OCI-LY7 (cell line): ENCODE measurements at regions of chr1 and their contacts with region 1.

Region 1: DNA sequence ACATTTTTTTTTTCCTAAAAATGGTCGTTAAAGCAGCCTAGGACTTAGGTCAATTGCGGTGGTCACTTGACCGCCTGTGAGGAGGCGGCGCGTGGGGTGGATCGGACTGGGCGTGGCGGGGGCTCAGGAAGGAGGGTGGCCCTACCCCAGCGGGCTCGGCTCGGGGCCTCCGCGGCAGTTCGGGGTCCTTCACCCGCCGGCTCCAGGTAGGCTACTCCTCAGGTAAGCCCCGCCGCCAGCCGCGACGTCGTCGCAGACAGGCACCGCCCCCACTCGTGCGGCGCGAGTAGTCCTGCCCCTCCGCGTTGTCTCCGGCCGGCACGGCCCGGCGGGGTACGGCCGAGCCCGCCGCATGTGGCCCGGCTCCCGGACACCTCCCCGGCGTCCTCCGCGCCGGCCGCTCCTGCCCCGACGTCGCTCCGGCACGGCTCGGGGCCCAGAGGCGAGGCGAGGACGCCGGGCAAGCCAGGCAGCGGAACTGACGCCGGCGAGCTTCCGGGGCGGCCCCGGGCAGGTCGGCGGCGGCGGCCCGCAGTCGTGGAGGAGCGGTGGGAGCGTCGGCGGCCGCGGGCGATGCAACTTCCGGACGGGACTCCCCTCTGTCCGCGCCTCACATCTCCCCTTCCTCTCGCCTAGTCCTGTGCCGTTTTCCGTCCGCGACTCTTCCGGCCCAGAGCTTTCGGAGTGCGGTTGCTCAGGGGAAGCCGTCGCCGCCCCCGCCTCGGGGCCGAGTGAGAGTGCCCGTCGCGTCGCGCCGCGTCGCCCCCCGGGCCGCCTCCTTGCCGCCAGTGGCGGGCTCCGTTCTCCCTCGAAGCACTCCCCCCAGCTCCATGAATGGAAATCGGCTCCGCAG is at the start of gene AGO3:
- DNase-seq: peak; percentile 91
- H3K4me3 ChIP-seq: peak within 1 kb of the TSS; percentile 93
- H3K27ac ChIP-seq: peak within 1 kb of the TSS; percentile 83
- H3K4me1 ChIP-seq: peaks cover 42% of the 10 kb centered on the region
- CTCF ChIP-seq: no peak
- total RNA-seq, gene AGO3: 22.5 and 25.1 TPM in 2 replicates

Region 2: GRCh38 chr1:35882945-35883634 is 47.7 kb before region 1 on chr1 and contains the start of gene AGO1:
- CTCF ChIA-PET with region 1: no interaction called
- POLR2A ChIA-PET with region 1: interaction called, 3 read pairs
- intact Hi-C with region 1: loop called (anchors 1 kb)
- DNase-seq: peak; percentile 95
- H3K4me3 ChIP-seq: peak within 1 kb of the TSS; percentile 99
- H3K27ac ChIP-seq: peak within 1 kb of the TSS; percentile 14
- H3K4me1 ChIP-seq: peaks cover 42% of the 10 kb centered on the region
- CTCF ChIP-seq: peak; percentile 88
- total RNA-seq, gene AGO1: 5.8 and 8.1 TPM in 2 replicates

Region 3: DNA sequence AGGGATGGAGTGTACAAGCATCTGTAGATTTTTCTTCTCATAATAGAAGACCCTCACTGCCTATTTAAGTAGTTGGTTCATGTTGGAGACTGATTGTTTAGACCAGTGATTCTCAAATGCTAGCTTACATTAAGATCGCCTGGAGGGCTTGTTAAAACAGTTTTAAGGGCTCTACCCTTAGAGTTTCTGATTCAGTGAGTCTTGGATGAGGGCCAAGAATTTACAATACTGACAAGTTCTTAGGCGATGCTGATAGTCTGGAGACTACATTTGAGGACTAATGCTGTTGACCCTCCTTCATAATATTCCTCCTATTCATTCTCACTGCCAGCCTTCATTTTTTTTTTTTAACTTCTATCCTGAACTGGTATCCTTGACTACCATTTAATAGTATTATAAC is 15.1 kb before region 1 on chr1:
- CTCF ChIA-PET with region 1: no interaction called
- POLR2A ChIA-PET with region 1: no interaction called
- intact Hi-C with region 1: no loop called
- DNase-seq: no peak
- H3K4me3 ChIP-seq: no peak overlapping the region
- H3K27ac ChIP-seq: no peak overlapping the region
- H3K4me1 ChIP-seq: no peaks in the 10 kb centered on the region
- CTCF ChIP-seq: no peak

Region 4: GRCh38 chr1:36051821-36052220 is 121.0 kb after region 1 on chr1:
- CTCF ChIA-PET with region 1: no interaction called
- POLR2A ChIA-PET with region 1: no interaction called
- intact Hi-C with region 1: no loop called
- DNase-seq: no peak
- H3K4me3 ChIP-seq: no peak overlapping the region
- H3K27ac ChIP-seq: no peak overlapping the region
- H3K4me1 ChIP-seq: no peaks in the 10 kb centered on the region
- CTCF ChIP-seq: no peak

Region 5: DNA sequence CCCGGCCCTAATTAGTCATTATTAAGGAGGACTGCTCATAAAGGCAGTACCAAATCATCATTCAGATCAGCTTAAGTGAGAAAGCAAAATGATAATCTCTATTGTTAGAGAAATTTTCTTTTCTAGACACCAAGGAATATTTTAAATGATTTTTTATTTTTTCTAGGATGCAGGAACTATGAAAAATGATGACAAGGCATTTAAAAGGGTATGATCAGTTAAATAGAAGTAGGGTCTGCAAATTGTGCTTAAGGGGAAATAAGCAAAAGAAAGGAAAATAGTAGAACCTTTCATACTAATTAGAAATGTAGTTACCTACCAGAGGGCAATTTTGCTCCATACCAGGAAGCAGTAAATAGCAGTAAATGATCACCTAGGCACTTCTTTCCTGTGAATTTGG is 131.5 kb after region 1 on chr1:
- CTCF ChIA-PET with region 1: no interaction called
- POLR2A ChIA-PET with region 1: no interaction called
- intact Hi-C with region 1: no loop called
- DNase-seq: no peak
- H3K4me3 ChIP-seq: no peak overlapping the region
- H3K27ac ChIP-seq: no peak overlapping the region
- H3K4me1 ChIP-seq: no peaks in the 10 kb centered on the region
- CTCF ChIP-seq: no peak

Region 6: DNA sequence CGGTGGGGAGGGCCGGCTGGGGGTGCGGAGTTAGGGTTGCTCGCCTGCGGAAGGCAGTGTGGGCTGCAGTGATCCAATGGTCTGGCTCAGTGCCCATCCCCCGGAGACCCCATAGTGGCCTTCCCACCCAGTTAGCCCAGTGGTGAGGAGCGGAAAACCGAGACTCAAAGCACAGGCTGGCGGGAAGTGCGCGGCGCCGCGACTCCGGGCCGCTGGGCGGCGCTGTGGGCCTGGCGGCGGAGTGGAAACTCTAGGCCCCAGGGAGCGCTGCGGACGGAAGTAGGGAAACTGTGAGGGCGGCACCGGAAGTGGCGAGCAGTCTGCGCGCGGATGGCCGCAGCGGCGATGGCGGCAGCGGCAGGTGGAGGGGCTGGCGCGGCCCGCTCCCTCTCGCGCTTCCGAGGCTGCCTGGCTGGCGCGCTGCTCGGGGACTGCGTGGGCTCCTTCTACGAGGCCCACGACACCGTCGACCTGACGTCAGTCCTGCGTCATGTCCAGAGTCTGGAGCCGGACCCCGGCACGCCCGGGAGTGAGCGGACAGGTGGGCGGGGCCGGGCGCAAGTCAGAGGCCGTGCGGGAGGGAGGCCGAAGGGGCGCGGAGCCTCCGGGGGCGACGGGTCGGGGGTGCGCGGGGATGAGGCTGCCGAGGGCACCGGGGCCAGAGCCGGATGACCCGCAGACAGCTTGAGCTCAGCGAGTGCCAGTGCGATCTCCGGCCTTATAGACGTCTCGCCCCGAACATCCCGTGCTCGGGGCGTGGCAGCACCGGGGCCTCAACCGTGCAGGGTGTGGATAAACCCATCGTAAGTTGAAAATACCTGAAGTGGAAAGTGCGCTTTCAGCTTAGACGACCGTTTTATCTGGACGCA is 158.0 kb after region 1 on chr1 and contains the start of gene ADPRS:
- CTCF ChIA-PET with region 1: no interaction called
- POLR2A ChIA-PET with region 1: no interaction called
- intact Hi-C with region 1: loop called (anchors 2 kb)
- DNase-seq: peak; percentile 94
- H3K4me3 ChIP-seq: peak within 1 kb of the TSS; percentile 83
- H3K27ac ChIP-seq: peak within 1 kb of the TSS; percentile 35
- H3K4me1 ChIP-seq: peaks cover 16% of the 10 kb centered on the region
- CTCF ChIP-seq: peak; percentile 95
- total RNA-seq, gene ADPRS: 42.3 and 44.3 TPM in 2 replicates

Region 7: GRCh38 chr1:36385410-36386257 is 454.8 kb after region 1 on chr1 and contains the start of gene STK40:
- CTCF ChIA-PET with region 1: no interaction called
- POLR2A ChIA-PET with region 1: no interaction called
- intact Hi-C with region 1: loop called (anchors 10 kb)
- DNase-seq: peak; percentile 100
- H3K4me3 ChIP-seq: peak within 1 kb of the TSS; percentile 96
- H3K27ac ChIP-seq: peak within 1 kb of the TSS; percentile 98
- H3K4me1 ChIP-seq: peaks cover 59% of the 10 kb centered on the region
- CTCF ChIP-seq: no peak
- total RNA-seq, gene STK40: 41.9 and 43.8 TPM in 2 replicates